ENCODE measurements at regions of chr1 and their contacts with region 1.

Region 1: GRCh38 chr1:201408176-201408833 is 9.2 kb upstream of the LAD1 start:
- DNase-seq: peak; percentile 41 to 81
- ATAC-seq: peak; percentile 79 to 85
- H3K4me3 ChIP-seq: no peak overlapping the region
- H3K27ac ChIP-seq: peak overlapping the region; percentile 29 to 50 (median 40)
- H3K4me1 ChIP-seq: no peaks in the 10 kb centered on the region
- H3K27me3 ChIP-seq: no peaks in the 10 kb centered on the region
- CTCF ChIP-seq: peak; percentile 88 to 94 (median 93)
- POLR2A ChIP-seq: no peak

Region 2: GRCh38 chr1:201254625-201255506 is 153.4 kb before region 1 on chr1:
- in situ Hi-C with region 1: no loop called
- intact Hi-C with region 1: loop called (anchors 1 kb)
- DNase-seq: peak in 1 of 2 donors; percentile 53
- ATAC-seq: peak; percentile 57 to 87
- H3K4me3 ChIP-seq: no peak overlapping the region
- H3K27ac ChIP-seq: no peak overlapping the region
- H3K4me1 ChIP-seq: no peaks in the 10 kb centered on the region
- H3K27me3 ChIP-seq: peaks cover under 1 to 9% (median 7%) of the 10 kb centered on the region in 3 donors
- CTCF ChIP-seq: peak; percentile 94 to 99 (median 97)
- POLR2A ChIP-seq: no peak

Region 3: DNA sequence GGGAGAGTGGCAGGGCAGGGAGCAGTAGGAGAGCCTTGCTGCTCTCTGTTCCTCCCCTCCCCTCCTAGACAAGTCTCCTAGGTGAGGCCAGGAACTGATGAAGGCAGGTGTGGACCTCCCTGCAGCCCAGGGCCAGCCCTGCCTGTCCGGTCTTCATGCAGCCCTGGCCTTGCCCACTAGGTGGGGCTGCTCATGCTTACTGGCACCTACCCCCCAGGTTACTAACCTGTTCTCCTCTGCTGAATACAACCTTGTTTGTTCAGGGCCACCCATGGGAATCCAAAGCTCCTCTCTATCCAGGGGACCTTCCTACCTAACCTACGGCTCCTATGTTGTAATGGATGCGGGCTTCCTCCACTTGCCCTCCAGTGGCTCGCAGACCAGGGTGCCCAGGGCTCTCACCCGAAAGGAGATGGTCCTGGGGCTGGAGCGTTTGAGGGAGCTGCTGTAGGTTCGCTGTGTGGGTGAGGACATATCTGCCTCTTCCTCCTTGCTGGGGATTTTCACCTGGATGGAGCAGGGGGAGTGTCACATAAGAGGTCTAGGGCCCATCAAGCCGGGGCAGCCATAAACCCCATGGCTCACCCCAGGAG is 22.9 kb before region 1 on chr1:
- in situ Hi-C with region 1: no loop called
- intact Hi-C with region 1: loop called (anchors 1 kb)
- DNase-seq: peak; percentile 24 to 69
- ATAC-seq: peak; percentile 56 to 75
- H3K4me3 ChIP-seq: no peak overlapping the region
- H3K27ac ChIP-seq: peak overlapping the region in 3 of 4 donors; percentile 64 to 73 (median 70)
- H3K4me1 ChIP-seq: peaks cover 15 to 20% of the 10 kb centered on the region in 2 donors
- H3K27me3 ChIP-seq: no peaks in the 10 kb centered on the region
- CTCF ChIP-seq: peak; percentile 47 to 83 (median 79)
- POLR2A ChIP-seq: no peak

Region 4: DNA sequence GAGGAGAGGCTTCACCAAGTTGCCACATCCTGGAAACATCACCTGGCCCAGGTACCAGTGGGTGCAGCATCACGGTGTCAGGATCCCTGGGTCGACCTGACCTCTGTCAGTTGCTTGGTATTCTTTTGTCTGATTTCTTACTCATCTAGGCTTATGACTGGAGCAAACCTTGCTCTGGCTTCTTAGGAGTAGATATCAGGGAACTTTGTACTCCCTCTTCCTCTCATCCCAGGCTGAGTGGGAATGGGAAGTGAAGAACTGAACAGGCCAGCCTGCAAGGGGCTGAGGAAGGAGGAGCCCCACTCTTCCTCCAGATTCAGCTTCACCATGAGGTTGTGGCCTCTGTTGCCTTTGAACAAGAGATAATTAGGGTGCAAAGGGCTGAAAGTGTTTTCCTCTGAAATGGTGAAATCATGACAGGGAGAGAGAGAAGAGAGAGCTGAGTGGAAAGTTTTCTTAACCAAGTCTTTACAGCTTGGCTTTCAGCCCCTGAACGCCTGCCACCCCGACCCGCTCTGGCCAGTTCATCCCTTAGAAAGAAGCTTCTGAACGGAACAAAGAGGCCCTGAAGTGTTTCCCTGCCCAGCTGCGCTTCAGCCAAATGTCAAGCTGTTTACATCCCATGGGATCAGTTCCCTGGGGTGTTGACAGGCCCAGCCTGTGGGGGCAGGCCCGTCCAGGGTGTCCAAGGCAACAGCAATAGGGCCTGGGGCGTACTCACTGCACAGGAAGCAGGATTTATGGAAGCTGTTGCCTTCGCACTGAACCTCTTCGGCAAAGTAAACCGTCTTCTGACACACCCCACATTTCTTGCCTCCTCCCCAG is 87.4 kb after region 1 on chr1:
- in situ Hi-C with region 1: no loop called
- intact Hi-C with region 1: no loop called
- DNase-seq: peak; percentile 38 to 57
- ATAC-seq: peak; percentile 57 to 61
- H3K4me3 ChIP-seq: no peak overlapping the region
- H3K27ac ChIP-seq: peak overlapping the region; percentile 53 to 77 (median 66)
- H3K4me1 ChIP-seq: peaks cover 49 to 59% of the 10 kb centered on the region in 2 donors
- H3K27me3 ChIP-seq: no peaks in the 10 kb centered on the region
- CTCF ChIP-seq: no peak
- POLR2A ChIP-seq: no peak

Region 5: GRCh38 chr1:201783572-201783971 is 375.3 kb after region 1 on chr1:
- in situ Hi-C with region 1: no loop called
- intact Hi-C with region 1: no loop called
- DNase-seq: no peak
- ATAC-seq: no peak
- H3K4me3 ChIP-seq: no peak overlapping the region
- H3K27ac ChIP-seq: no peak overlapping the region
- H3K4me1 ChIP-seq: peaks cover 0 to 3% of the 10 kb centered on the region in 2 donors
- H3K27me3 ChIP-seq: no peaks in the 10 kb centered on the region
- CTCF ChIP-seq: no peak
- POLR2A ChIP-seq: no peak